ENCODE measurements at regions of chr11 and their contacts with region 1.

Region 1: GRCh38 chr11:118488480-118489109 is 38.7 kb upstream of the TTC36 start:
- DNase-seq: peak; percentile 80
- H3K4me3 ChIP-seq: no peak overlapping the region
- H3K27ac ChIP-seq: no peak overlapping the region
- H3K4me1 ChIP-seq: no peaks in the 10 kb centered on the region
- H3K27me3 ChIP-seq: no peaks in the 10 kb centered on the region
- CTCF ChIP-seq: peak; percentile 74 to 76
- POLR2A ChIP-seq: no peak

Region 2: GRCh38 chr11:118224511-118225188 is 263.9 kb before region 1 on chr11 and contains the start of gene JAML:
- CTCF ChIA-PET with region 1: no interaction called
- POLR2A ChIA-PET with region 1: no interaction called
- dilution Hi-C with region 1: no loop called
- intact Hi-C with region 1: no loop called
- DNase-seq: no peak
- H3K4me3 ChIP-seq: no peak within 1 kb of the TSS
- H3K27ac ChIP-seq: no peak within 1 kb of the TSS
- H3K4me1 ChIP-seq: peaks cover 18% of the 10 kb centered on the region
- H3K27me3 ChIP-seq: peaks cover 4% of the 10 kb centered on the region in 2 experiments
- CTCF ChIP-seq: no peak
- POLR2A ChIP-seq: no peak
- total RNA-seq, gene JAML: 0.35 and 0.39 TPM in 2 replicates

Region 3: DNA sequence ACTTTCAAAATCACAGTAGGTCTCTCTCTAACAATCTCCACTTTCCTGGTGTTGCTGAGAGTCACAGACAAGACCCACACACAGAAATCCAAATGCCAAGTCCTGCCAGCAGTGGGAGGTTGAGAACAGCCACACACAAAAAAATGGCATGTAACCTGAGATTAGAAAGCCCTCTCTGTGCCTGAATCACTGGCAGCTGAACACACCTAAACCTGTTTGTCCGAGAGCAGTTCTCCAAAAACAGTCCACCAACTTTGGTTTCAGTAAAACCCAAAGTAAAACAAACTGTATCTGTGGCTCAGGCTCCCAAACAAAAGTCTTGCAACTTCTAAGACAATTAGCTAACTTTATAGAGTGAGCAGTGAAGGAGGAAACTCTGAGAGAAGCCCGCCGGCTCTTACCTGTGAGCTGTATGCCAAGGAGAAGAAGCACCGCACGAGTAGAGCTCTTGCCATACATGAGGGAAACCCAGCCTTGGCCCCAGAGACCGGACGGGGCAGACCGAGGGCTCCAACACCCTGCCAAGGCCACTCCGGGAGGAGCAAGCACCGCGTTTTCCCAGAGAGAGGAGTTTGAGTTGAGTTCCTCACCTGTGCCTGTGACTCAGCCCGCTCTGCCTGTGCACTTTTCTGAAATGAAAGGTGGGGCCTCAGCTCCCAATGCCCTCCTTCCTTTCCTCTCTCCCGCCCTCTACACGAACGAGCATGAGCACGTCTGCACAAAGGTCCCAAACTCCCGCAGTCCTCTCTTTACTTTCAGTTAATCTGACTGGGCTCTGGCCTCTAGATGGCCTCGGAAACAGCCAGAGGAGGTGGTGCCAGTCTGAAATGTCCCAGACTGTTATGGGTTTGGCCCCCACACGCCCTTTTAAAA is 224.7 kb before region 1 on chr11 and contains the start of gene MPZL2:
- CTCF ChIA-PET with region 1: no interaction called
- POLR2A ChIA-PET with region 1: no interaction called
- dilution Hi-C with region 1: no loop called
- intact Hi-C with region 1: no loop called
- DNase-seq: peak; percentile 57
- H3K4me3 ChIP-seq: peak within 1 kb of the TSS; percentile 13 to 69 (median 44)
- H3K27ac ChIP-seq: peak within 1 kb of the TSS; percentile 4
- H3K4me1 ChIP-seq: peaks cover 51% of the 10 kb centered on the region
- H3K27me3 ChIP-seq: no peaks in the 10 kb centered on the region
- CTCF ChIP-seq: no peak
- POLR2A ChIP-seq: peak; percentile 68
- total RNA-seq, gene MPZL2: 37.1 and 49.5 TPM in 2 replicates

Region 4: GRCh38 chr11:118295834-118296454 is 192.7 kb before region 1 on chr11:
- CTCF ChIA-PET with region 1: interaction called, 7 read pairs
- POLR2A ChIA-PET with region 1: no interaction called
- dilution Hi-C with region 1: no loop called
- intact Hi-C with region 1: loop called (anchors 2 kb)
- DNase-seq: peak; percentile 59
- H3K4me3 ChIP-seq: no peak overlapping the region
- H3K27ac ChIP-seq: no peak overlapping the region
- H3K4me1 ChIP-seq: no peaks in the 10 kb centered on the region
- H3K27me3 ChIP-seq: peaks cover 1 to 5% of the 10 kb centered on the region in 2 experiments
- CTCF ChIP-seq: peak; percentile 52 to 63
- POLR2A ChIP-seq: no peak

Region 5: DNA sequence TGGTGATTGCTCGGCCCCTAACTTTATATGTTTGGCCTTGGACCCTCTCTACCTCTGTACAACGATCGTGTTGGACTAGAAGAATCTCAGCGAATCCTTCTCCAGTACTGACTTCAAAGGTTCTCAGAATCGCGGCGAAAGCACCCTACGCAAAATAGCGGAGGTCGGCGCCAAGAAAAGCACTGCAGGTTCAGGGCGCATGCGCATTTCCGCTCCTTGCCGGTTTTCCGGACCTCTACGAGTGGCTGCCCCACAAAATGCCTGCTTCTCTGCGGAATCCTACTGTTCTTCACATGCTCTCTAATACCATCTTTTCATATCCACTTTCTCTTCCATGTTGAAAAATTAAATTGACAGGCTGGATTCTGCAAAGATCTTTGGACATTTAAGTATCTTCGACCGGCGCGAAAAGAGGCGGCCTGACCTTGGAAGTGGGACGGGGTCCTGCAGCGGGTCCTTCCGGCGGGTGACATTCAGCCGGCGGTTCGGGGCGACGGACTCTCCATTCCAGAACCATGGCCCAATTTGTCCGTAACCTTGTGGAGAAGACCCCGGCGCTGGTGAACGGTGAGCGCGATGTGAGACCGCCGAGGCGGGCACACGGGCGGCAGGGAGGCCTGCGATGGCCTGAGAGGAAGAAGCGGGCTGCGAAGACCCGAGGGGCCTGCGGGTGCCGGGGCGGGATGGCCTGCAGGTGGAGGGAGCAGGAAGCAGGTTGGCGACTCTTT is 87.3 kb before region 1 on chr11 and contains the start of gene ATP5MG:
- CTCF ChIA-PET with region 1: interaction called, 14 read pairs
- POLR2A ChIA-PET with region 1: no interaction called
- dilution Hi-C with region 1: loop called (anchors 25 kb)
- intact Hi-C with region 1: loop called (anchors 1 kb)
- DNase-seq: peak; percentile 97
- H3K4me3 ChIP-seq: peak within 1 kb of the TSS; percentile 71 to 99 (median 94)
- H3K27ac ChIP-seq: peak within 1 kb of the TSS; percentile 63
- H3K4me1 ChIP-seq: peaks cover 10% of the 10 kb centered on the region
- H3K27me3 ChIP-seq: no peaks in the 10 kb centered on the region
- CTCF ChIP-seq: peak in 1 of 2 donors; percentile 15
- POLR2A ChIP-seq: peak; percentile 69
- total RNA-seq, gene ATP5MG: 211 and 242 TPM in 2 replicates

Region 6: DNA sequence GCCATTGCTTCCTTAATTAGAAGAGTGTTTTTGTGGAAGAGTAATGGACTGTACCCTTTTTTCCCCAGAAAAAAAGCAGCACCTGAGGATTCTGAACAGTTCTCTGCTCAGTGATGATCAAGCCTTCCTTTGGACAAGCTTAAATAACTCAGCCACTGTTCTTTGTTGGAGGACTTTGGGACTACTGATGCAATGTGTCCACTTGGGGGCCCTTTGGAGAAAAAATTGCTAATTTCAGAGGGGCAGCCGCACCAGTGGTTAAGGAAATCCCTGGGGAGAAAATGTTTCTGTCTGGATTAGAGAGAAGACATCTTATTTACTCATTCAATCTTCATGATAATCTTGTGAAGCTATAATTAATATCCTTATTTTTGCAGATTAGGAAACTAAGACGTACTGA is 57.6 kb before region 1 on chr11:
- CTCF ChIA-PET with region 1: interaction called, 9 read pairs
- POLR2A ChIA-PET with region 1: no interaction called
- dilution Hi-C with region 1: no loop called
- intact Hi-C with region 1: loop called (anchors 1 kb)
- DNase-seq: no peak
- H3K4me3 ChIP-seq: no peak overlapping the region
- H3K27ac ChIP-seq: no peak overlapping the region
- H3K4me1 ChIP-seq: peaks cover 18% of the 10 kb centered on the region
- H3K27me3 ChIP-seq: peaks cover 0 to 5% of the 10 kb centered on the region in 2 experiments
- CTCF ChIP-seq: no peak
- POLR2A ChIP-seq: no peak

Region 7: DNA sequence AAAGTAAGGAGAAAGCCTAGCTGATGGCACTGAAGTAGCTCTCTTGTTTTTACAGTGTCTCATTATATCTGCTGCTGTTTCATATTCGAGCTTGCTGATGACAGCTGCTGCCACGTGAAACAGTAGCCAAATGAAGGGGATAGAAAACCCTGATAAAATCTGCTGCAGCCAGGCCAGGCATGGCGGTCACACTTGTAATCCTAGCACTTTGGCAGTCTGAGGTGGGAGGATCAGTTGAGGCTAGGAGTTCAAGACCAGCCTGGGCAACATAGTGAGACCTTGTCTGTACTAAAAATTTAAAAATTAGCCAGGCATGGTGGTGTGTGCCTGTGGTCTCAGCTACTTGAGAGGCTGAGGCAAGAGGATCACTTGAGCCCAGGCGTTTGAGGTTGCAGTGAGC is 63.7 kb after region 1 on chr11:
- CTCF ChIA-PET with region 1: no interaction called
- POLR2A ChIA-PET with region 1: no interaction called
- dilution Hi-C with region 1: no loop called
- intact Hi-C with region 1: no loop called
- DNase-seq: no peak
- H3K4me3 ChIP-seq: no peak overlapping the region
- H3K27ac ChIP-seq: no peak overlapping the region
- H3K4me1 ChIP-seq: no peaks in the 10 kb centered on the region
- H3K27me3 ChIP-seq: no peaks in the 10 kb centered on the region
- CTCF ChIP-seq: no peak
- POLR2A ChIP-seq: no peak

Region 8: DNA sequence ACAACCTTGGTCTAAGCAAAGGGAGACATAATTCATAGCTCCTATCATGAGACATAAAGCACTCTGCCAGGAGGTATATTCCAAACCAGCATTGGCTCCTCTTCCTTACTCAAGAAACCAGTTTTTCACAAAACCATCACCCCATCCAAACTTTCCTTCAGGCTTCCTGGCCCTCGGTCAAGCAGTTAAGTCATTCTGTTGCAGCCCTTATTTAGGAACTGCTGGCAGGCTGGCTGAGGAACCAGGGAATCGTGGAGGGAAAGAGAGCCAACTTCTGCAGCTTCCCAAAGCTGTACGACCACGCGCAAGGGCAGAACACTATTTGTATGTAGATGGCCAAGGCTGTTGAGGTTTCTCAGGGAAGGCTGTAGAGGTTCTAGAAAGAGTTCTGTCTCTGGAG is 76.5 kb after region 1 on chr11:
- CTCF ChIA-PET with region 1: no interaction called
- POLR2A ChIA-PET with region 1: no interaction called
- dilution Hi-C with region 1: no loop called
- intact Hi-C with region 1: loop called (anchors 5 kb)
- DNase-seq: no peak
- H3K4me3 ChIP-seq: no peak overlapping the region
- H3K27ac ChIP-seq: no peak overlapping the region
- H3K4me1 ChIP-seq: peaks cover 5% of the 10 kb centered on the region
- H3K27me3 ChIP-seq: no peaks in the 10 kb centered on the region
- CTCF ChIP-seq: no peak
- POLR2A ChIP-seq: no peak

Region 9: DNA sequence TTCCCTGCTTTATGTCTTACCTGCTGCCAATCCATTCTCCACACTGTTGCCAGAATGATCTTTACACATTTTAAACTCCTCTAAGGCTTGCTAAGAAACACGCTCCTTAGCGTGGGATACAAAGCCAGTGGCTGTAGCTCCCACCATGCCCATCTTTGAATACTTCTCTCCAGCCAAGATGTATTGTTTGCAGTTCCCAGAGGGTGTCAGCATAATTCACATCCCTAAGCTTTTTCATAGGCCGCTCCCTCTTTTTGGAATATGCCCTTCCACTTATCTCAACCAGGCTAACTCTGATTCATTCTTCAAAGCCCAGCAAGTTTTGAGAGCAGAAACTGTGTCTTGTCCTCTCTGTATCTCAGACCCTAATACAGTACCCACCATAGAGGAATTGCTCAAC is 459.4 kb after region 1 on chr11:
- CTCF ChIA-PET with region 1: no interaction called
- POLR2A ChIA-PET with region 1: no interaction called
- dilution Hi-C with region 1: no loop called
- intact Hi-C with region 1: no loop called
- DNase-seq: no peak
- H3K4me3 ChIP-seq: no peak overlapping the region
- H3K27ac ChIP-seq: no peak overlapping the region
- H3K4me1 ChIP-seq: no peaks in the 10 kb centered on the region
- H3K27me3 ChIP-seq: peaks cover 7 to 9% of the 10 kb centered on the region in 2 experiments
- CTCF ChIP-seq: no peak
- POLR2A ChIP-seq: no peak